Ascending aorta (tissue), 2 donors: ENCODE measurements at regions of chr1 and their contacts with region 1.

Region 1: DNA sequence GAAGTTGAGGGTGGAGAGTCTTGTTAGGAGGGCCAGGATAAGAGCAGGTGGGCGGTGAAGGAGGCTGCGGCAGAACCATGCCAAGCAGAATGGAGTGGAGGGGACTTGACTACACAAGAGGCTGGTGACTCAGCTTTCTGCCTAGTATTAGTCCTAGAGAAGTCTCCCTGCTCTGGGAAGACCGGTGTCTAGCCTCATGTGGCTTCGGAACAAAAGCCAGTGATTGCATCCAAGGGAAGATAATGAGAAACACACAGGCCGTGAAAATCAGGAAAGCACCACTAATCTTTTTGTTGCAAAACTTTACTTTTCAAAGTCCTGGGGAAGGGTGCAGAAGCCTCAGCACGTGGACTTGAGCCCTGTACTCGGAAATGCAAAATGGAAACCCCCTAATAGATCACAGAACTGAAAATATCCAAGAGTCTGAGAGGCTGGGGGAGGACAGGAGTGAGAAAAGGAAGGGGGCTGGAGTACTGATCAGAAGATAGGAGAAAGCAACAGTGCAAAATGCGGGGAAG is 31.4 kb downstream of the DDR2 start:
- DNase-seq: peak in 1 of 2 donors; percentile 73
- H3K4me3 ChIP-seq: no peak overlapping the region
- H3K27ac ChIP-seq: no peak overlapping the region
- H3K4me1 ChIP-seq: no peaks in the 10 kb centered on the region
- H3K27me3 ChIP-seq: no peaks in the 10 kb centered on the region
- CTCF ChIP-seq: no peak

Region 2: GRCh38 chr1:160963521-160963920 is 1700.1 kb before region 1 on chr1:
- intact Hi-C with region 1: no loop called
- DNase-seq: no peak
- H3K4me3 ChIP-seq: no peak overlapping the region
- H3K27ac ChIP-seq: no peak overlapping the region
- H3K4me1 ChIP-seq: no peaks in the 10 kb centered on the region
- H3K27me3 ChIP-seq: no peaks in the 10 kb centered on the region
- CTCF ChIP-seq: no peak

Region 3: GRCh38 chr1:162391790-162392563 is 271.7 kb before region 1 on chr1:
- intact Hi-C with region 1: no loop called
- DNase-seq: no peak
- H3K4me3 ChIP-seq: no peak overlapping the region
- H3K27ac ChIP-seq: no peak overlapping the region
- H3K4me1 ChIP-seq: no peaks in the 10 kb centered on the region
- H3K27me3 ChIP-seq: no peaks in the 10 kb centered on the region
- CTCF ChIP-seq: peak; percentile 64 to 76 (median 71)

Region 4: GRCh38 chr1:162561037-162561616 is 102.5 kb before region 1 on chr1:
- intact Hi-C with region 1: no loop called
- DNase-seq: peak; percentile 95 to 99
- H3K4me3 ChIP-seq: peak overlapping the region; percentile 98 to 100
- H3K27ac ChIP-seq: peak overlapping the region; percentile 99
- H3K4me1 ChIP-seq: peaks cover 3 to 12% of the 10 kb centered on the region in 2 donors
- H3K27me3 ChIP-seq: no peaks in the 10 kb centered on the region
- CTCF ChIP-seq: no peak

Region 5: DNA sequence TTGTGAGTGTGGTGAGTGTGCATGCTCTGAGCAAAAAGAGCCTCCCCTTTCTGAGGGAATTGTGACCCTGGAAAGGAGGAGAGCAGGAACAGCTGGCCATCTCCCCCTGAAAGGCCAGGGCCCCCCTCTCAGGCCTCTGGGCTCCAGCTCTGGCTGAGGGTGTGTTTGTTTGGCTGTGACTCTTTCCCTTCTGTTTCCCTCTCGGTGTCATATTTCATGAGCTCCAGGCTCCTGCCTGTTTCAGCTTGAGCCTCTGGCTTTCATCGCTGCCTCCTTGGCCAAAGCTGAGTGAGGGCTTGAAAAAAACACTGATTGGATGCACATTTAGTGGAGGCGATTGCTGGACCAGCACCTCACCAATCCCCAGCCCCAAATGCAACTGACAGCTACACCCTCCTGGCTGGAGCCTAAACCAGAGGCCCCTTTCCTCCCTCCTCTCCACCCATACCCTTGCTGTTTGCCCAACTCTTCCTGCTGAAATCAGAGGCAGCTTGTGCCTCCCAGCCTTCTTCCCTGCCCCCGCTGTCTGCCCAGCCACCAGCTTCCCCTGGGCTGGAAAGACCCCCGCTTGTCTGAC is 32.7 kb after region 1 on chr1:
- intact Hi-C with region 1: loop called (anchors 5 kb)
- DNase-seq: peak; percentile 20 to 77
- H3K4me3 ChIP-seq: peak overlapping the region in 1 of 2 donors; percentile 19
- H3K27ac ChIP-seq: peak overlapping the region; percentile 41 to 60
- H3K4me1 ChIP-seq: peaks cover 10% of the 10 kb centered on the region in 2 donors
- H3K27me3 ChIP-seq: no peaks in the 10 kb centered on the region
- CTCF ChIP-seq: no peak

Region 6: DNA sequence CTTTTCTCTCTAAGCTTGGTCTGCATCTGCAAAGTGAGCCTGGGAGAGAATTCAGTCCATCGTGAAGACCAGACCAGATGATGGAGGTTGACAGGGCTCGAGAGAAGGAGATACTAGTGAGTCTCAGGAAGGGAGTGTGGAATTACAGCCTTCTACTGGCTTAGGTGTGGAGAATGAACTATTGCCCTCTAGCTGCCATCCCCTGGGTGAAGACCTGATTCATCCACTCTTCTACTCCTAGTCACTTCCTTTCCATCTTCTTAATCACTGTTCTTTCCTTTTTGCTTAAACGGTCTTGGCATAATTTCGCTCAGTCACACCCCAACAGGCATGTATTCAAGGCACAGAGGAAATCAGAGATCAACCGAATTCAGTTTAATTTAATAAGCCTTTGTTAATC is 92.9 kb after region 1 on chr1:
- intact Hi-C with region 1: no loop called
- DNase-seq: no peak
- H3K4me3 ChIP-seq: no peak overlapping the region
- H3K27ac ChIP-seq: no peak overlapping the region
- H3K4me1 ChIP-seq: no peaks in the 10 kb centered on the region
- H3K27me3 ChIP-seq: no peaks in the 10 kb centered on the region
- CTCF ChIP-seq: no peak